A673 (cell line): ENCODE measurements at regions of chr10 and their contacts with region 1.

Region 1: GRCh38 chr10:79463578-79464496 is 18.4 kb upstream of the ZCCHC24 start:
- DNase-seq: no peak
- H3K4me3 ChIP-seq: no peak overlapping the region
- H3K27ac ChIP-seq: no peak overlapping the region
- H3K4me1 ChIP-seq: no peaks in the 10 kb centered on the region
- H3K27me3 ChIP-seq: no peaks in the 10 kb centered on the region
- CTCF ChIP-seq: no peak

Region 2: DNA sequence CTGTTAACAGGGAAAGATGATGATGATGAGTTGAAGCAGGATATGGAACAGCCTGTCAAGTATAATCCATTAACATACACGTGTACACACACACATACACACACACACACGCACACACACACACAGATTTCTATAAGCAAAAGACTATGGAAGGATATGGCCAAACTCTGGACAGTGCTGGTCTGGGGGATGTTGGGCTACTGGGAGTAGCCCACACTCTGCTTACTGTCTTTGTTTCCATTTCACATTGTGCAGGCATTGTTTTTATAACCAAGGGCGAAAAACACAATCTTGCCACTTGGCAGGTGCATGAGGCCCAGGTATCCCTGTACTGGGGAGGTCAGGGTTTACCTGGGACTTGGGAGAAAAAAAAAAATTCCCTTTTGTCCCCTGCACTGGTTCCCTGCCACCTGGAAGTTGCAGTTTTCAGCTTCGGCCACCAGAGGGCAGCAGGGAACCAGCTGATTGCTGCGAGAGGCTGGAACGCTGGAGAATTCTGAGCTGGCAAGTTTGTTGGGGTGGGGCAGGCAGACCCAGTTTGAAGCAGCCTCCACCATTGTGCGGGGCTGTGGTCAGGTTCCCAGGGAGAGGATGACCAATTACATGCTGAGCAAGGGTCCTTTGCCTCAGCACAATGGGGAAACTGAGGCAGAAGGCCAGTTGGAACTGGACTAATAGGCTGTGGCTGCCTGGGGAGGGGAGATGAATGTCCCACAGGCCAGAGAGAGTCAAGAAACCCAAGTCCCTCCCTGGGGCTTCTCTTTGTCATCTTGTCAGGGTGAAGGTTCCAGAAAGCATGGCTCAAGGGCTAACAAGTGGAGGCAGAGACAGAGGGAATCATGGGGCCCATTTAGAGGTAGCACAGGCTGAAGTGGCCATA is 89.3 kb before region 1 on chr10:
- CTCF ChIA-PET with region 1: interaction called, 26 read pairs
- POLR2A ChIA-PET with region 1: no interaction called
- intact Hi-C with region 1: loop called (anchors 2 kb)
- DNase-seq: peak; percentile 76
- H3K4me3 ChIP-seq: no peak overlapping the region
- H3K27ac ChIP-seq: no peak overlapping the region
- H3K4me1 ChIP-seq: no peaks in the 10 kb centered on the region
- H3K27me3 ChIP-seq: no peaks in the 10 kb centered on the region
- CTCF ChIP-seq: peak; percentile 91

Region 3: GRCh38 chr10:79400146-79401004 is 63.5 kb before region 1 on chr10:
- CTCF ChIA-PET with region 1: no interaction called
- POLR2A ChIA-PET with region 1: no interaction called
- intact Hi-C with region 1: loop called (anchors 5 kb)
- DNase-seq: peak; percentile 53
- H3K4me3 ChIP-seq: no peak overlapping the region
- H3K27ac ChIP-seq: no peak overlapping the region
- H3K4me1 ChIP-seq: peaks cover 39% of the 10 kb centered on the region
- H3K27me3 ChIP-seq: no peaks in the 10 kb centered on the region
- CTCF ChIP-seq: peak; percentile 91

Region 4: DNA sequence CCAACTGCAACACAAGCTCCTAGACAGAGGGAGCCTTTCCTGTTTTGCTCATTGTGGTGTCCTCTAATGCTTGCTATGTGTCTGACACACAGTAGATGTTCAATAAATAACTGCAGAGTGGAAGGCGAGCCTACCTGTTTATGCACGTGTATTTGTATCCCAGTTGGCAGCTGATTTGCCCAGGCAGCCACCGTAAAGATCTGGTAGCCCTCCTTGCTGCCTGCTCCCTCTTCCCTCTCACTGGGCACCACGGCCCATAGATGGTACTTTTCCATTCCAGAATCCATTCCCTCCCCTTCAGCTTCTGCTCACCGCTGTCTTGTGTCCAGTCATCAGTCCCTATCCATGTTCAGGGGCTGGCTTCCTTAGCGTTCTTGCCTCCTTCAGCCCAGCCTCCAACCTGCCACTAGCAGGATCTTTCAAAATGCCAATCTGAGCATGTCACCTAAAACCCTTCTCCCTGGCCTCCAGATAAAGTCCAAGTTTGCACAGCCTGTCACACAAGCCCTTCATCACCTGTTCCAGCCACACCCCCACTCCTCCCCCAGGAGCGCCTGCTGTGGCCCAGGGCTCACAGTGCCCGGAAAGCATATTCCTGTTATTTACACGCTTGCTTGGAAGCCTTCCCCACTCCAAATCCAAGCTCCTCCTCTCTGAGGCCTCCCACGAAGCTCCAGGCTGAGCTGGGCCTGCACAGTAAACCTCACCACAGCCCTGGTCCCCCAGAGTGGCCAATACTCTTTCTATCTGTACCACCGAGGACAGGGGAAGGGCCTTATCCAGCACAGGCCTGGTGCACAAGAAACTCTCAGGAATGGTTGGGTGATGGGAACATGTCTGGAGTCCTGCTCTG is 39.4 kb before region 1 on chr10:
- CTCF ChIA-PET with region 1: interaction called, 10 read pairs
- POLR2A ChIA-PET with region 1: no interaction called
- intact Hi-C with region 1: no loop called
- DNase-seq: no peak
- H3K4me3 ChIP-seq: no peak overlapping the region
- H3K27ac ChIP-seq: no peak overlapping the region
- H3K4me1 ChIP-seq: peaks cover 32% of the 10 kb centered on the region
- H3K27me3 ChIP-seq: no peaks in the 10 kb centered on the region
- CTCF ChIP-seq: no peak

Region 5: DNA sequence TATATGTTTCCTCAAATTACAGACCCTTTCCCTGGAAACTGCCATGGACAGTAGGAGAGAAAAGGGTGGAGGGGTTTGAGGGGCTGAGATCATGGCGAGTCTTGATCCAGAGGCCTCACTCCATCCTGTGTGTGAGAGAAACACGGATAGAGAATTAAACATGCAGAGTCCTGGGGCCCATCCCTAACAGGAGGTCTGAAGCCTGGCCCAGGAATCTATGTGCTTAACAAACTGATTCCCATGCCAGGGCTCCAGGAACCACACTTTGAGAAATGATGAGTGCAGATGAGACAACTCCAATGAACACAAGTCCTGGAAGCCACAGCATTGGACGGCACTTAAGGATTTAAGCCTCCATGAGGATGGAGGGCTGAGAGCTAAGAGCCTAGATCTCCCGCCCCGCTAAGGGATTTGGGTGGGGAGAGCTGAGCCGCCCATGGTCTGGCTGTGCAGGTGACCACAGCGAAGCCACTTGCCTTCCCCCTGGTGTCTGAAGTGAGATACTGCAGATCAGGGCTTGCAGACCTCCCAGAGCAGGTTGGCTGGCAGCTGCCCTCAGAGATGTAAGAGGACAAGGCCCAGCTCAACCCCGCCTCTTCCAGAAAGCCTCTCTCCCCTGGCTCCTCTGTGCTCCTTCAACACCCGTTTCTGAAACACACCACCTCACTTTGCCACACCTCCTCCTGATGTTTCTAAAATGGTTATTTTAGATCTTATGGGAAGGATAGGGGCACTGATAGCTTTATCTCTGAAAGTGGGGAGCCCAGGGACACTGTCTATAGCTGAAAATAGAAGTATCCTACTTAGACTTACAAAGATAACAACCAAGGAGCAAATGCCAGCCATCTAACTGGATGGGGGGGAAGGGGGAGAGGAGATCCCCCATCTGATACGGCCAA is 23.7 kb after region 1 on chr10:
- CTCF ChIA-PET with region 1: interaction called, 10 read pairs
- POLR2A ChIA-PET with region 1: no interaction called
- intact Hi-C with region 1: no loop called
- DNase-seq: peak; percentile 62
- H3K4me3 ChIP-seq: no peak overlapping the region
- H3K27ac ChIP-seq: no peak overlapping the region
- H3K4me1 ChIP-seq: peaks cover 4% of the 10 kb centered on the region
- H3K27me3 ChIP-seq: no peaks in the 10 kb centered on the region
- CTCF ChIP-seq: peak; percentile 70

Region 6: GRCh38 chr10:80158598-80159127 is 694.8 kb after region 1 on chr10:
- CTCF ChIA-PET with region 1: no interaction called
- POLR2A ChIA-PET with region 1: interaction called, 10 read pairs
- intact Hi-C with region 1: no loop called
- DNase-seq: peak; percentile 99
- H3K4me3 ChIP-seq: no peak overlapping the region
- H3K27ac ChIP-seq: peak overlapping the region; percentile 88
- H3K4me1 ChIP-seq: peaks cover 37% of the 10 kb centered on the region
- H3K27me3 ChIP-seq: no peaks in the 10 kb centered on the region
- CTCF ChIP-seq: no peak